ENCODE measurements at regions of chr11 and their contacts with region 1.

Region 1: DNA sequence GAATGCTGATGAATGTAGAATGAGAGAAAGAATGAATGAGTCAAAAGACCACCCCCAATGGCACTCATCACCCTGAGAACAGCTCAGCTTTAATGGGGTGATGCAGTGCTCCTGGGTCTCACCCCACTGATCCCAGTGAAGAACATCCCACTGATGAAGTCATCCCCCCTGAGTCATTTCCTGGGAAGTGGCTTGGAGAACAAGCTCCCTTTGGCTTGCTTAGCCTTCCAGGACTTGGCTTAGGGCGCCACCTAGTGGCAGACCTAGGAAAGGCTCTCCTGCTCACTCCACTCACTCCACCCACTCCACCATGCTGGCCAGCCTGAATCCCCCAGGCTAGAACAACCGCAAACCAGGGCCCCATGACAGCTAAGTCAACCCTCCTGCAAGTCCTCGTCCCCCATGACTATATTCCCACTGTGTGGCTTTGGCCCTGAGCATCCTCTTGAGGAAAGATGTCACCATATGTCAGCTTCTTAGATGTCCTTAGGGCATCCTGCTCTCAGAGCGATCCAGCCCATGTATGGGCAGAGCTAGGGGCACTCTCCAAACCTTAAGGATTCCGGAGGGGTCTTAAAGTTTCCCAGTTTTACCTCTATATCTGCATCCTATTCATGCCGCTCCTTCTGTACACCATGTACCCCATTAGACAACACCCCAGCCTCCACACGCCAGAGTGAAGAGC is 17.8 kb upstream of the TMPRSS13 start:
- H3K4me3 ChIP-seq: no peak overlapping the region
- H3K27ac ChIP-seq: no peak overlapping the region
- H3K4me1 ChIP-seq: no peaks in the 10 kb centered on the region
- CTCF ChIP-seq: peak; percentile 89

Region 2: GRCh38 chr11:117591316-117592039 is 355.5 kb before region 1 on chr11:
- CTCF ChIA-PET with region 1: no interaction called
- POLR2A ChIA-PET with region 1: no interaction called
- H3K4me3 ChIP-seq: no peak overlapping the region
- H3K27ac ChIP-seq: no peak overlapping the region
- H3K4me1 ChIP-seq: no peaks in the 10 kb centered on the region
- CTCF ChIP-seq: no peak

Region 3: GRCh38 chr11:117817368-117818040 is 129.5 kb before region 1 on chr11:
- CTCF ChIA-PET with region 1: interaction called, 223 read pairs
- POLR2A ChIA-PET with region 1: interaction called, 4 read pairs
- H3K4me3 ChIP-seq: no peak overlapping the region
- H3K27ac ChIP-seq: no peak overlapping the region
- H3K4me1 ChIP-seq: peaks cover 3% of the 10 kb centered on the region; the same call in 1 of the 2 replicates
- CTCF ChIP-seq: peak; percentile 83

Region 4: DNA sequence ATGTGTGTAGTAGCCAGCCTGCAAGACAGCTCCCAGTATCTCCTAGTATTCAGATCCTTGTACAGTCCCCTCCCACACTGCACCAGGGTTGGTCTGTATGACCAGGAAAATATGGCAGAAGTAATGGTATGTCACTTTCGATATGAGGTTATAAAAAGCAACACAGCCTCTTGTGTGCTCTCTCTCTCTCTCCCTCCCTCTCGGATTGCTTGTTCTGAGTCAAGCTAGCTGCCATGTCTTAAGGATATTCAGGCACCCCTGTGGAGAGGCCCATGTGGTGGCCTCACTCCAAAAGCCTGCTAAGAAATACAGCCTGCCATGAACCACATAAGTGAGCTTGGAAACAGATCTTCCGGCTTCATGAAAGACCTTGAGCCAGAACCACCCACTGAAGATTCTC is 95.9 kb before region 1 on chr11:
- CTCF ChIA-PET with region 1: interaction called, 169 read pairs
- POLR2A ChIA-PET with region 1: no interaction called
- H3K4me3 ChIP-seq: no peak overlapping the region
- H3K27ac ChIP-seq: no peak overlapping the region
- H3K4me1 ChIP-seq: no peaks in the 10 kb centered on the region
- CTCF ChIP-seq: no peak

Region 5: GRCh38 chr11:117876341-117877119 is 70.5 kb before region 1 on chr11 and contains the start of gene FXYD6:
- CTCF ChIA-PET with region 1: interaction called, 11 read pairs
- POLR2A ChIA-PET with region 1: interaction called, 4 read pairs
- H3K4me3 ChIP-seq: peak within 1 kb of the TSS; percentile 59
- H3K27ac ChIP-seq: no peak within 1 kb of the TSS; the same call in 1 of the 2 replicates
- H3K4me1 ChIP-seq: no peaks in the 10 kb centered on the region
- CTCF ChIP-seq: no peak

Region 6: GRCh38 chr11:118046051-118046963 is 99.3 kb after region 1 on chr11:
- CTCF ChIA-PET with region 1: interaction called, 100 read pairs
- POLR2A ChIA-PET with region 1: no interaction called
- H3K4me3 ChIP-seq: no peak overlapping the region
- H3K27ac ChIP-seq: no peak overlapping the region
- H3K4me1 ChIP-seq: no peaks in the 10 kb centered on the region
- CTCF ChIP-seq: no peak

Region 7: DNA sequence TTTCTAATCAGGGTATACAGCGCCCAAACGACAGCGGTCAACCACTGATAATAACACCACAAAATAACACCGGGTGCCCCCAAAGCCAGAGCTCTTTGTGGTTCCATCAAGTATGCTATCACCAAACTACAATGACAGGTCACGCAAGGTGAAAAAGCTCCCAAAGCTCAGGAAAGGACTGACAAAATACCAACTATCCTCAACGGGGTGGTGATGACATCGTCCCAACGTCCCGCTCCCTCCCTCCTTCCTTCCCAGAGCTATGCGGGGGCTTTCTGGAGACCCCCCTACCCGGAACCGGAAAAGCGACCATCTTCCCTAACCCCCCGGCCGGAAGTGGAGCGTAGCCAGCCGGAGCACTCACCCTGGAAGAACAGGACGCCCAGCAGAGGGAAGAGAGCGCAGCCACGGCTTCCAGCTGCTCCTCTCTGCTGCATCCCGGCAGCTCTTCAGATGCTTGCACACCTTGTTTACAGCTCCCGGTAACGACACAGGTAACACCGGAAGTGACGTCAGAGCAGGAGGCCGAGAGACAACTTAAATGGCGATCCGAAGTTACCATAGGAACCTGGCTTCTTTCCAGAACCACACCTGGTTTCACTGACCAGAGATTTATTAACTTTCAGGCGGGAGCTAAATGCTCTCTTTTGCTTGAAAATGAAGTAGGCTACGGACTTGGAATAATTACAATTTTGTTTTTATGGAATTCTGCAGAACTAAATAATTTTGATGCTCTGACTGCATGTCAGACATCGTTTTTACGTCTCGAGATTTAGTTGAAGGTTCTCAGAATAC is 305.1 kb after region 1 on chr11 and contains the start of gene MPZL3:
- CTCF ChIA-PET with region 1: no interaction called
- POLR2A ChIA-PET with region 1: no interaction called
- H3K4me3 ChIP-seq: peak within 1 kb of the TSS; percentile 94
- H3K27ac ChIP-seq: peak within 1 kb of the TSS; percentile 86
- H3K4me1 ChIP-seq: no peaks in the 10 kb centered on the region
- CTCF ChIP-seq: no peak